Activated CD4-positive, alpha-beta T cell treated with anti-CD3 and anti-CD28 coated beads, Interleukin-2, amount 10 ng/mL, durations not matched to agents 24 days and 14 days (primary cell): ENCODE measurements at regions of chr5 and their contacts with region 1.

Region 1: DNA sequence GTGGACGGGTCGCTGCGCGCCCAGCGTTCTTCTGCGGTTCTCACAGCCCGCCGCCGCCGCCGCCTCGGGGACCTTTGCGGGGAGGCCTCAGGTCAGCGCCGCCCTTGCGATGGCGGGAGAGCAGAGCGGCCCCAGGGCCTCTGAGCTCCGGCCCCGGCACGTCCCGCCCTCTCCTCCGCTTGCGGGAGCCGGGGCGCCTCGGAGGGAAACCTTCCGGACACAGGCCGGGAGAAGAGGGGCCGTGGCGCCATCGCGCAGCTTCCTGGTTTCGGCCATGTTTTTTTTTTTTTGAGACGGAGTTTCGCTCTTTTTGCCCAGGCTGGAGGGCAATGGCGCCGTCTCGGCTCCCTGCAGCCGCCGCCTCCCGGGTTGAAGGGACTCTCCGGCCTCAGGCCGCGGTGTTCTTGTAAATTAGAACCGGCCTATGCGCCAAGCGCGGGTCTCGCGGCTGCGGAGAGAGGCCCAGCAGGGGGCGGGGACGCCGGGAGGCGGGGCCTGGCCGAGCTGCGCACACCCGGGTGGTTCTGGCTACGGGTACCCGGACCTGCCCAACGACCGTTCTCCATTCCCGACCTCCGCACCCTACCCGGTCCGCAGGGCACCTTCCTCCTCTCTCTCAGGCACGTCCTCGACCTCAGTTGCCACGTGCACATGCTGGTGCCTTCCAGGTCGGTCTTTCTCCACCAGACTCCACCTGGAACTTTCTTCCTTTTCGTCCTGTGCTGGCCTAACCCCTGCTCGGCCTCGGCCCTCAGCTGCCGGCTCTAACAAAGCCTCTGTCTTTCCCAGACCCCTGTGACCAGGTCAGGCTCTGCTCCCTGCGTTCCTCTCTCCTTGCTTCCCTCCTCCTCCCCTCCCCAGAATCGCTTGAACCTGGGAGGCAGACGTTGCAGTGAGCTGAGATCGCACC is 28.8 kb upstream of the MGAT1 start:
- DNase-seq: peak; percentile 94
- H3K4me3 Mint-ChIP-seq: peak overlapping the region; percentile 93
- H3K27ac Mint-ChIP-seq: peak overlapping the region; percentile 99
- H3K4me1 Mint-ChIP-seq: peaks cover 33% of the 10 kb centered on the region
- H3K27me3 Mint-ChIP-seq: no peaks in the 10 kb centered on the region

Region 2: GRCh38 chr5:180399401-180400215 is 431.8 kb before region 1 on chr5:
- intact Hi-C with region 1: no loop called
- DNase-seq: no peak
- H3K4me3 Mint-ChIP-seq: no peak overlapping the region
- H3K27ac Mint-ChIP-seq: no peak overlapping the region
- H3K4me1 Mint-ChIP-seq: no peaks in the 10 kb centered on the region
- H3K27me3 Mint-ChIP-seq: no peaks in the 10 kb centered on the region

Region 3: GRCh38 chr5:180755601-180756000 is 75.8 kb before region 1 on chr5:
- intact Hi-C with region 1: no loop called
- DNase-seq: no peak
- H3K4me3 Mint-ChIP-seq: no peak overlapping the region
- H3K27ac Mint-ChIP-seq: no peak overlapping the region
- H3K4me1 Mint-ChIP-seq: no peaks in the 10 kb centered on the region
- H3K27me3 Mint-ChIP-seq: peaks cover 13% of the 10 kb centered on the region

Region 4: GRCh38 chr5:180860887-180861822 is 29.8 kb after region 1 on chr5 and contains the start of gene ZFP62:
- intact Hi-C with region 1: loop called (anchors 1 kb)
- DNase-seq: peak; percentile 96
- H3K4me3 Mint-ChIP-seq: peak within 1 kb of the TSS; percentile 91
- H3K27ac Mint-ChIP-seq: peak within 1 kb of the TSS; percentile 94
- H3K4me1 Mint-ChIP-seq: peaks cover 15% of the 10 kb centered on the region
- H3K27me3 Mint-ChIP-seq: peaks cover 6% of the 10 kb centered on the region
- total RNA-seq, gene ZFP62: 26.7 and 28.0 TPM in 2 replicates